ENCODE measurements at regions of chr9 and their contacts with region 1.

Region 1: GRCh38 chr9:38371495-38371894 is 21.0 kb upstream of the ALDH1B1 start:
- DNase-seq: peak; percentile 38
- H3K4me3 ChIP-seq: no peak overlapping the region
- H3K27ac ChIP-seq: no peak overlapping the region
- H3K4me1 ChIP-seq: no peaks in the 10 kb centered on the region
- H3K27me3 ChIP-seq: no peaks in the 10 kb centered on the region
- CTCF ChIP-seq: peak in 3 of 4 experiments; percentile 23 to 57 (median 50)
- POLR2A ChIP-seq: no peak

Region 2: GRCh38 chr9:38432922-38433510 is 61.5 kb after region 1 on chr9:
- intact Hi-C with region 1: loop called (anchors 5 kb)
- DNase-seq: no peak
- H3K4me3 ChIP-seq: no peak overlapping the region
- H3K27ac ChIP-seq: no peak overlapping the region
- H3K4me1 ChIP-seq: no peaks in the 10 kb centered on the region
- H3K27me3 ChIP-seq: no peaks in the 10 kb centered on the region
- CTCF ChIP-seq: peak; percentile 32 to 68 (median 60)
- POLR2A ChIP-seq: no peak

Region 3: GRCh38 chr9:38671748-38672147 is 300.3 kb after region 1 on chr9:
- intact Hi-C with region 1: no loop called
- DNase-seq: no peak
- H3K4me3 ChIP-seq: no peak overlapping the region
- H3K27ac ChIP-seq: no peak overlapping the region
- H3K4me1 ChIP-seq: no peaks in the 10 kb centered on the region
- H3K27me3 ChIP-seq: no peaks in the 10 kb centered on the region
- CTCF ChIP-seq: no peak
- POLR2A ChIP-seq: no peak